K562 (cell line): ENCODE measurements at regions of chr15 and their contacts with region 1.

Region 1: DNA sequence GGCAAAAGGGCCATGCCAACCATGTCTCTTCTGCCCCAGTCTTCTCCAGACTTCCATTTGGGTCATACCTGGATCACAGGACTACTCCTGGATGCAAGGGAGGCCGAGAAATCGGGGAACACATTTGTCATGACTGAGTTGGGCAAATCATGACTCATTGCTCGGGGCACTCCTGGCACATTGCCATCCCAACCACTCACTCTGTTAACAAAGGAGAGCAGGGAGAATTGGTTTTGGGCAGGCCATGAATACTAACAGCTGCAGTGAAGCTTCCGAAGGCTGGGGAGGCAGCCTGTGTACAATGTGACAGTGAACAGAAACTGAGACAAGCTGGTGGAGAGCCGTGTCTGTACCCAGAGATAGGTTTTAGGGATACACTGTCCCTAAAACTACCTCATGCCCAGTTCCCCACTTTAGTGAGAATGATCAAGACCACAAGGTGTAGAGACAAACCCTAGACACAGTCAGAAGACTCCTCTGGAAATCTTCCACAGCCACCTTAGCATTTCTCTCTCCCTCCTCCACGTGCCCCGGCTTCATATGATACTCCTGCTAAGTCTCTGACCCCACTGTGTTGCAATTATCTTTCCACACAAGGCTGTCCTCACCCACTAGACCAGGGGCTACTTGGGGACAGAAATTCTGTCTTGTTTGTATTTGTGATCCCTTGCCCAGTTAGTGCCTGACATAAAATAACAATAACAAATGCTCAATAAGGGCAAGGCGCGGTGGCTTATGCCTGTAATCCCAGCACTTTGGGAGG is 10.5 kb upstream of the BUB1B start:
- DNase-seq: no peak
- ATAC-seq: no peak
- H3K4me3 ChIP-seq: no peak overlapping the region
- H3K27ac ChIP-seq: no peak overlapping the region
- H3K4me1 ChIP-seq: no peaks in the 10 kb centered on the region
- H3K27me3 ChIP-seq: 0 out of 5 replicates have a peak, but pooled peaks cover 0 to 3% of the 10 kb centered on the region in 2 experiments
- CTCF ChIP-seq: no peak
- EP300 ChIP-seq: no peak
- POLR2A ChIP-seq: no peak
- RAD21 ChIP-seq: no peak

Region 2: GRCh38 chr15:40054605-40055545 is 95.5 kb before region 1 on chr15:
- CTCF ChIA-PET with region 1: no interaction called
- POLR2A ChIA-PET with region 1: no interaction called
- in situ Hi-C with region 1: loop called (anchors 5 kb)
- intact Hi-C with region 1: no loop called
- DNase-seq: no peak
- ATAC-seq: no peak
- H3K4me3 ChIP-seq: no peak overlapping the region
- H3K27ac ChIP-seq: no peak overlapping the region
- H3K4me1 ChIP-seq: peaks cover 0 to 13% of the 10 kb centered on the region in 2 experiments; a peak in 3 of 5 replicates
- H3K27me3 ChIP-seq: no peaks in the 10 kb centered on the region
- CTCF ChIP-seq: no peak
- EP300 ChIP-seq: no peak
- POLR2A ChIP-seq: no peak
- RAD21 ChIP-seq: no peak